ENCODE measurements at regions of chr9 and their contacts with region 1.

Region 1: GRCh38 chr9:78196258-78196657 is 39.6 kb upstream of the CEP78 start:
- DNase-seq: no peak
- H3K4me3 ChIP-seq: no peak overlapping the region
- H3K4me3 Mint-ChIP-seq: no peak overlapping the region
- H3K27ac ChIP-seq: no peak overlapping the region
- H3K27ac Mint-ChIP-seq: peak overlapping the region in 1 of 7 donors; percentile 10
- H3K4me1 ChIP-seq: peaks cover 17% of the 10 kb centered on the region
- H3K4me1 Mint-ChIP-seq: peaks cover 10 to 23% (median 17%) of the 10 kb centered on the region in 4 donors
- H3K27me3 ChIP-seq: no peaks in the 10 kb centered on the region
- H3K27me3 Mint-ChIP-seq: no peaks in the 10 kb centered on the region

Region 2: GRCh38 chr9:78235756-78236538 is 39.7 kb after region 1 on chr9 and contains the start of gene CEP78:
- CTCF ChIA-PET with region 1: no interaction called
- POLR2A ChIA-PET with region 1: interaction called, 11 read pairs
- intact Hi-C with region 1: loop called (anchors 1 kb)
- DNase-seq: peak; percentile 82 to 88 (median 85)
- H3K4me3 ChIP-seq: peak within 1 kb of the TSS; percentile 37 to 89
- H3K4me3 Mint-ChIP-seq: peak within 1 kb of the TSS in 3 of 8 donors; percentile 92 to 98 (median 97)
- H3K27ac ChIP-seq: peak within 1 kb of the TSS; percentile 81
- H3K27ac Mint-ChIP-seq: peak within 1 kb of the TSS; percentile 88 to 99 (median 96)
- H3K4me1 ChIP-seq: peaks cover 40% of the 10 kb centered on the region
- H3K4me1 Mint-ChIP-seq: peaks cover 30 to 35% (median 32%) of the 10 kb centered on the region in 4 donors
- H3K27me3 ChIP-seq: no peaks in the 10 kb centered on the region
- H3K27me3 Mint-ChIP-seq: no peaks in the 10 kb centered on the region
- total RNA-seq, gene CEP78: 25.3 to 27.6 TPM

Measured in CD4-positive, alpha-beta memory T cell (primary cell).